B cell (primary cell): ENCODE measurements at regions of chr20 and their contacts with region 1.

Region 1: DNA sequence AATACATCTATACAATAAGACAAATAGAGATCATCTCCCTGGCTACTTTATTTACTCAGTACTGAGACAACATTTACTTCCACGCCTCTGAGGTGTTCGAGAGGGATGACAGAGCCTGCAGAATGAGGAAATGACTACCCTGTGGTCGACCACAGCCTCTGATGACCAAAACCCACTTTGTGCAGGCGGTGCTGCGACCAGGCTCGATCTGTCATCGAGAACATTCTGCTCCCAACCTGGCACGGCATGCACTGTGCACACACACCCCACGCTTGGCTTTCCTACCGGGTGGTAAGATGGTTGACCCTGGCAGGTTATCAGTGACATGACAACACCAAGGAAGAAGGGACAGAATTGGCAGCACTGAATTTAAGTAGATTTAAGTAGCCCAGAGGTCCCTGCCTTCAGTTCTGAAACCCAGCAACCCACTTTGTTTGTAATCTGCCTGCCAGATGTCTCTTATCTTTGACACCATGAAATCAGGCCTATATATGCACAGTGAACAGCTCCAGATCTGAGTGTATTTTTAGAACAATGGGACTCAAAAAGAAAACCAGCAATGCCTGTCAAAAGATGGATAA is 42.6 kb downstream of the TTI1 start:
- DNase-seq: peak; percentile 75
- ATAC-seq: peak; percentile 88
- H3K4me3 ChIP-seq: no peak overlapping the region
- H3K4me3 Mint-ChIP-seq: peak overlapping the region; percentile 6
- H3K27ac ChIP-seq: no peak overlapping the region
- H3K27ac Mint-ChIP-seq: peak overlapping the region; percentile 51
- H3K4me1 ChIP-seq: peaks cover 13 to 18% of the 10 kb centered on the region in 2 donors
- H3K4me1 Mint-ChIP-seq: peaks cover 18% of the 10 kb centered on the region
- H3K27me3 ChIP-seq: no peaks in the 10 kb centered on the region
- H3K27me3 Mint-ChIP-seq: no peaks in the 10 kb centered on the region
- CTCF ChIP-seq: no peak

Region 2: DNA sequence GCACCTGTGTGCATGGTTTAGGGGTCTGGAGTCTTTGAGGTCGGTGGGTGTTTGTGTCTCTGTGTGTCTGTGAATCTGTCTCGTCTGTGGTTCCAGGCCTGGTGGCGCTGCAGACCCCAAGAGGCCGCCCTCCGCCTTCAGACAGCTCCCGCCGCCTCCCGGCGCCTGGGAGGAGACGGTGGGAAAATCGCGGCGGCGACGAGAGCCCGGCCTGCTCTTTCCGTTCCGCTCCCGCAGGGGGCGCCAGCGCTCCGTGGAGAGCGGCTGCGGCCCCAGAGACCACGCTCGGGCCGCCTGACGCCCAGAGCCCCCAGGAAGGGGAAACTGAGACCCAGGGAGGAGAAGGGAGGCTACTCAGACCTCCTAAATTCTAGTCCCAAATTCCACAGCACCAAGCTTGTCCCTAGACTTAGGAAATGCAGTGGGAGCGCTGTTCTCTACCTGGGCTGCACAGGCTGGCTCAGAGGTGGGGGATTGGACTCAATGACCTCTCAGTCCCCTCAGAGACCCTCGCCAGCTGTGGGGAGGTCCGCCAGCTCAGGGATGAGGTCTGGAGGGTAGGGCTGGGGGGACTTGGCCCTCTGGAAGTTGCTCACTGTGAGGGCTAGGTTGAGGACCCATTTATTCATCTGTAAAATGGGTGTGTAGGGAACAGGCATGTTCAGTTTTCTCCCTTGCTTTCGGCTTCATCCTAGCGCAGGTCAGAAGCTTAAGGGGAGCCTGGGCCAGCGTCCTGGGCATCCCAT is 426.1 kb before region 1 on chr20:
- CTCF ChIA-PET with region 1: interaction called, 87 read pairs
- POLR2A ChIA-PET with region 1: no interaction called
- intact Hi-C with region 1: no loop called
- DNase-seq: peak; percentile 67
- ATAC-seq: peak; percentile 49
- H3K4me3 ChIP-seq: no peak overlapping the region
- H3K4me3 Mint-ChIP-seq: no peak overlapping the region
- H3K27ac ChIP-seq: no peak overlapping the region
- H3K27ac Mint-ChIP-seq: no peak overlapping the region
- H3K4me1 ChIP-seq: peaks cover 3 to 5% of the 10 kb centered on the region in 2 donors
- H3K4me1 Mint-ChIP-seq: peaks cover 2% of the 10 kb centered on the region
- H3K27me3 ChIP-seq: peaks cover 0 to 31% (median 13%) of the 10 kb centered on the region in 4 experiments
- H3K27me3 Mint-ChIP-seq: peaks cover 43% of the 10 kb centered on the region
- CTCF ChIP-seq: peak; percentile 96

Region 3: DNA sequence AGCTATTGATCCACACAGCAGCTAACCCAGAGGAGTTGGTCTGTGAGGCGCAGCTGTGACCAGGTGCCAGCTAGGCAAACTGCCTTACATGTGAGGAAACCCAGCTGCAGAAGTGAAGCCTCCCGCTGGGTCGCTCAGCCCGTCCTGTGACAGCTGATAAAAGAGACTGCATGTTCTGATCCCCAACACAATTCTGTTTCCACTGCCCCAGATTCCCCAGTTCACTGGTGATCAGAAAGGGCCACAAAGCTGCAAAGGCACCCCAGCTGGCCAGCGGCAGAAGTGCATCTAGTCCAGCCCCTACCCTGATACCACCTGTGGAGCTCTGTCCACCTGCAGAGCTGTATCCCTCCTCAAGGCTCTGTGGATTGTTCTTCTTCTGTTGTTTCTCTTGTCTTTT is 232.3 kb before region 1 on chr20:
- CTCF ChIA-PET with region 1: interaction called, 10 read pairs
- POLR2A ChIA-PET with region 1: no interaction called
- intact Hi-C with region 1: loop called (anchors 5 kb)
- DNase-seq: no peak
- ATAC-seq: no peak
- H3K4me3 ChIP-seq: no peak overlapping the region
- H3K4me3 Mint-ChIP-seq: no peak overlapping the region
- H3K27ac ChIP-seq: no peak overlapping the region
- H3K27ac Mint-ChIP-seq: no peak overlapping the region
- H3K4me1 ChIP-seq: peaks cover 4 to 8% of the 10 kb centered on the region in 2 donors
- H3K4me1 Mint-ChIP-seq: peaks cover 24% of the 10 kb centered on the region
- H3K27me3 ChIP-seq: no peaks in the 10 kb centered on the region
- H3K27me3 Mint-ChIP-seq: no peaks in the 10 kb centered on the region
- CTCF ChIP-seq: no peak

Region 4: GRCh38 chr20:37935435-37935834 is 55.2 kb before region 1 on chr20:
- CTCF ChIA-PET with region 1: no interaction called
- POLR2A ChIA-PET with region 1: no interaction called
- intact Hi-C with region 1: no loop called
- DNase-seq: no peak
- ATAC-seq: no peak
- H3K4me3 ChIP-seq: no peak overlapping the region
- H3K4me3 Mint-ChIP-seq: no peak overlapping the region
- H3K27ac ChIP-seq: no peak overlapping the region
- H3K27ac Mint-ChIP-seq: no peak overlapping the region
- H3K4me1 ChIP-seq: no peaks in the 10 kb centered on the region
- H3K4me1 Mint-ChIP-seq: no peaks in the 10 kb centered on the region
- H3K27me3 ChIP-seq: peaks cover 0 to 2% (median 0%) of the 10 kb centered on the region in 4 experiments
- H3K27me3 Mint-ChIP-seq: peaks cover 14% of the 10 kb centered on the region
- CTCF ChIP-seq: no peak

Region 5: GRCh38 chr20:38008233-38008944 is 17.7 kb after region 1 on chr20:
- CTCF ChIA-PET with region 1: interaction called, 13 read pairs
- POLR2A ChIA-PET with region 1: no interaction called
- intact Hi-C with region 1: no loop called
- DNase-seq: no peak
- ATAC-seq: no peak
- H3K4me3 ChIP-seq: no peak overlapping the region
- H3K4me3 Mint-ChIP-seq: no peak overlapping the region
- H3K27ac ChIP-seq: no peak overlapping the region
- H3K27ac Mint-ChIP-seq: no peak overlapping the region
- H3K4me1 ChIP-seq: no peaks in the 10 kb centered on the region
- H3K4me1 Mint-ChIP-seq: no peaks in the 10 kb centered on the region
- H3K27me3 ChIP-seq: no peaks in the 10 kb centered on the region
- H3K27me3 Mint-ChIP-seq: no peaks in the 10 kb centered on the region
- CTCF ChIP-seq: no peak

Region 6: DNA sequence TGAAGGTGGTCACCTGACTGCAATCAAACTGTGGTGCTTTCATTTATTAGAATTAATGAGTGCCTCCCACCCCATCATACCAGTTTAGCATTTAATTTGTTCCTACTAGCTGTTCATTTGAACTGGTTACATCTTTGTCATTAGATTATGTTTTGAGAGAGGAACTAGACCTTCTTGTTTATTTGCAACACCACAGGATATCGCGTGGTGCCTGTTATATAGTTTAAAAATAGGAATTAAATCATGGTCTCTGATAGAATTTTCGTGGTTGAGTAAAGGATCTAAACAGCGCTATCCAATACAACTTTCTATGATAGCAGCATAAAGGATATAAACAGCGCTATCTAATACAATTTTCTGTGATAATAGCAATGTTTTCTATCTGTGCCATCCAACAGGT is 45.7 kb after region 1 on chr20:
- CTCF ChIA-PET with region 1: no interaction called
- POLR2A ChIA-PET with region 1: no interaction called
- intact Hi-C with region 1: no loop called
- DNase-seq: no peak
- ATAC-seq: no peak
- H3K4me3 ChIP-seq: no peak overlapping the region
- H3K4me3 Mint-ChIP-seq: no peak overlapping the region
- H3K27ac ChIP-seq: no peak overlapping the region
- H3K27ac Mint-ChIP-seq: no peak overlapping the region
- H3K4me1 ChIP-seq: peaks cover 35 to 40% of the 10 kb centered on the region in 2 donors
- H3K4me1 Mint-ChIP-seq: peaks cover 56% of the 10 kb centered on the region
- H3K27me3 ChIP-seq: no peaks in the 10 kb centered on the region
- H3K27me3 Mint-ChIP-seq: no peaks in the 10 kb centered on the region
- CTCF ChIP-seq: no peak

Region 7: GRCh38 chr20:38094373-38094891 is 103.8 kb after region 1 on chr20:
- CTCF ChIA-PET with region 1: no interaction called
- POLR2A ChIA-PET with region 1: no interaction called
- intact Hi-C with region 1: no loop called
- DNase-seq: peak; percentile 86
- ATAC-seq: peak; percentile 68
- H3K4me3 ChIP-seq: peak overlapping the region in 1 of 5 experiments; percentile 21
- H3K4me3 Mint-ChIP-seq: peak overlapping the region; percentile 77
- H3K27ac ChIP-seq: peak overlapping the region; percentile 95 to 96
- H3K27ac Mint-ChIP-seq: peak overlapping the region; percentile 98
- H3K4me1 ChIP-seq: peaks cover 53 to 60% of the 10 kb centered on the region in 2 donors
- H3K4me1 Mint-ChIP-seq: peaks cover 72% of the 10 kb centered on the region
- H3K27me3 ChIP-seq: no peaks in the 10 kb centered on the region
- H3K27me3 Mint-ChIP-seq: no peaks in the 10 kb centered on the region
- CTCF ChIP-seq: no peak